CD4-positive, alpha-beta memory T cell (primary cell): ENCODE measurements at regions of chr7 and their contacts with region 1.

Region 1: DNA sequence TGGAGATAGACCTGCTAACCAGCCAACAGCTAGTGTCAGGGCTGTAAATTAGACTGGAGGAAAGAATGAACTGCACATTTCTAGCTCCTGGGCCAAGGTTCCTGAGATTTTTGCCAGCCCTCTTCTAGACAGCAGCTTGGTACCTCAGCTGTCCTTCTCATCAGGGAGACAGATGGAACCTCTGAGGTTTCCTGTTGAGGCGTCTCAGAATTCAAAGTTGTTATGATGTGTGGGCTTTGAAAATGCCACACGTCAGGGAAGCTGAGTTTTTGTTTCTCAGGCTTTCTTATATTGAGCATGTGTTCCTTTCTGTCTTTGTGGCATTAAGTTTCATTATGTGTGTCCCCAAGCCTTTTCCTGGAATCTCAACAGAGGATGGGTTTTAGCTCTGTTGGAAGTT is 736.6 kb downstream of the AUTS2 start:
- DNase-seq: peak; percentile 21 to 50 (median 41)
- H3K4me3 ChIP-seq: no peak overlapping the region
- H3K4me3 Mint-ChIP-seq: peak overlapping the region in 7 of 8 donors; percentile 7 to 67 (median 23)
- H3K27ac ChIP-seq: no peak overlapping the region
- H3K27ac Mint-ChIP-seq: peak overlapping the region in 6 of 7 donors; percentile 51 to 97 (median 78)
- H3K4me1 ChIP-seq: peaks cover 9% of the 10 kb centered on the region
- H3K4me1 Mint-ChIP-seq: peaks cover 9 to 18% (median 14%) of the 10 kb centered on the region in 4 donors
- H3K27me3 ChIP-seq: no peaks in the 10 kb centered on the region
- H3K27me3 Mint-ChIP-seq: no peaks in the 10 kb centered on the region

Region 2: GRCh38 chr7:70307544-70308106 is 27.2 kb before region 1 on chr7:
- CTCF ChIA-PET with region 1: no interaction called
- POLR2A ChIA-PET with region 1: interaction called, 11 read pairs
- intact Hi-C with region 1: no loop called
- DNase-seq: peak in 4 of 5 donors; percentile 35 to 71 (median 58)
- H3K4me3 ChIP-seq: no peak overlapping the region
- H3K4me3 Mint-ChIP-seq: peak overlapping the region in 7 of 8 donors; percentile 10 to 72 (median 55)
- H3K27ac ChIP-seq: peak overlapping the region; percentile 0
- H3K27ac Mint-ChIP-seq: peak overlapping the region; percentile 61 to 95 (median 81)
- H3K4me1 ChIP-seq: peaks cover 32% of the 10 kb centered on the region
- H3K4me1 Mint-ChIP-seq: peaks cover 17 to 71% (median 33%) of the 10 kb centered on the region in 4 donors
- H3K27me3 ChIP-seq: no peaks in the 10 kb centered on the region
- H3K27me3 Mint-ChIP-seq: no peaks in the 10 kb centered on the region

Region 3: GRCh38 chr7:70372768-70373515 is 38.1 kb after region 1 on chr7:
- CTCF ChIA-PET with region 1: no interaction called
- POLR2A ChIA-PET with region 1: no interaction called
- intact Hi-C with region 1: no loop called
- DNase-seq: no peak
- H3K4me3 ChIP-seq: no peak overlapping the region
- H3K4me3 Mint-ChIP-seq: no peak overlapping the region
- H3K27ac ChIP-seq: no peak overlapping the region
- H3K27ac Mint-ChIP-seq: no peak overlapping the region
- H3K4me1 ChIP-seq: no peaks in the 10 kb centered on the region
- H3K4me1 Mint-ChIP-seq: no peaks in the 10 kb centered on the region
- H3K27me3 ChIP-seq: no peaks in the 10 kb centered on the region
- H3K27me3 Mint-ChIP-seq: no peaks in the 10 kb centered on the region